ENCODE measurements at regions of chr17 and their contacts with region 1.

Region 1: DNA sequence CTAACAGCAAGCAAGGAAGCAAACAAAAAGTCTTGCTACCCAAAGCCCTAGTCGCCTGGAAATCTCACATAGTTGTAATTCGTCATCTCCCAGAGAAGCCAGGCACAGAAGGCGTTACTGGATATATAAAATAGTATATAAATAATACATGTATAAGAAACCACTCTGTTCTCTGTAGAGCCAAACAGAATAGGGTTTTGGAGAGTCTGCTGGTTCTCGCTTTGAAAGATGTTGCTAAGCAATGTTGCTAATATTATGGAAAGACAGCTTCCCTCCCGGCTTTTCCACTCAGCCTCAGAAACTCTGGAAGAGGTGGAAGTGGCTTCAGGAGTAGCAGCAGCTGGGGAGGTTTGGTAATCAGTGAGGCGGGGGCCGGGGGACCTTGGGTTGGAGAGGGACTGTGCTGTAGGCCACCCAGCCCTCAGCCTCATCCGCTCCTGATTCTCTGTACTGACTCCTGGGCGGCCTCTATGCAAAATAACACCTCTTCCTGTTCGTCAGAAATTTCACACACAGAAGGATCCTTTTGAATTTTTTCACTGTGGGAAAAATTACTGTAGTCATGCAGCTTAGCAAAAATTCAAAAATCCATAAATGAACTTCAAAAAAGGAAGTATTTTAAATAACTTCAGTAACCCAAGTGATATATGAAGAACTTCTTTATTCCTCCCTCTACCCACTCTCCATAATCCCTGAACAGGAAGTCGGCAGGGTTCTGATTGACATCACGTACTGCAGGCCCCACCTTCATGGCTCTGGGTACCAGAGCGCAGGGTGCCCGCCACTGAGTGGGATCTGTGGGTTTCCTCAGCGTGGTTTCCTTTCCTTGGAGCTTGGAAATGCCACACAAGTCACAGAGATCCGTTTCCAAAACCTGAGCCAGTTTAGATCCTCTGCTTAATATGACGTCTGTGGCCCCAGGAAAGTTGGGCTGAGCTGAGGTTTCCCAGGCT is 51.4 kb downstream of the RAP1GAP2 start:
- DNase-seq: no peak
- ATAC-seq: no peak
- H3K4me3 Mint-ChIP-seq: no peak overlapping the region
- H3K27ac Mint-ChIP-seq: no peak overlapping the region
- H3K4me1 Mint-ChIP-seq: peaks cover 10% of the 10 kb centered on the region
- H3K27me3 Mint-ChIP-seq: peaks cover 16% of the 10 kb centered on the region
- CTCF ChIP-seq: no peak

Region 2: DNA sequence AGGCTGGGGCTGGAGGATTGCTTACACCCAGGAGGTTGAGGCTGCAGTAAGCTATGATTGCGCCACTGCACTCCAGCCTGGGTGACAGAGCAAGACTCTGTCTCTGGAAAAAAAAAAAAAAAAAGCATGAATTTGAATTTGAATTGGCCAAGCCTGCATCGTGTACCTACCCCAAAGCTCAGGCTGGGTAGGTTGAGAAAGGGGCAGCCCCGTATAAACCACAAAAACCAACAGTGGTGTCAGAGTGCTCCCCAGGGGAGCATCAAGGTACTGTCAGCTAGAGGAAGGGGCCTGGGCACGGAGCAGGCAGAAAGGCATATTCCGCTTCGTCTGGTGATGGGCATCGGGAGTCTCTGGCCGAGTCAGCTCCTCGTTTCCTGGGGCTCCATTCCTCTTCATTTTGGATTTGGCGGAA is 10.5 kb before region 1 on chr17:
- CTCF ChIA-PET with region 1: interaction called, 52 read pairs
- POLR2A ChIA-PET with region 1: no interaction called
- intact Hi-C with region 1: no loop called
- DNase-seq: peak; percentile 72
- ATAC-seq: peak; percentile 99
- H3K4me3 Mint-ChIP-seq: no peak overlapping the region
- H3K27ac Mint-ChIP-seq: no peak overlapping the region
- H3K4me1 Mint-ChIP-seq: peaks cover 7% of the 10 kb centered on the region
- H3K27me3 Mint-ChIP-seq: peaks cover 2% of the 10 kb centered on the region
- CTCF ChIP-seq: peak; percentile 47

Region 3: GRCh38 chr17:2862197-2862596 is 14.5 kb after region 1 on chr17:
- CTCF ChIA-PET with region 1: interaction called, 18 read pairs
- POLR2A ChIA-PET with region 1: no interaction called
- intact Hi-C with region 1: no loop called
- DNase-seq: no peak
- ATAC-seq: no peak
- H3K4me3 Mint-ChIP-seq: no peak overlapping the region
- H3K27ac Mint-ChIP-seq: no peak overlapping the region
- H3K4me1 Mint-ChIP-seq: no peaks in the 10 kb centered on the region
- H3K27me3 Mint-ChIP-seq: no peaks in the 10 kb centered on the region
- CTCF ChIP-seq: no peak

Region 4: DNA sequence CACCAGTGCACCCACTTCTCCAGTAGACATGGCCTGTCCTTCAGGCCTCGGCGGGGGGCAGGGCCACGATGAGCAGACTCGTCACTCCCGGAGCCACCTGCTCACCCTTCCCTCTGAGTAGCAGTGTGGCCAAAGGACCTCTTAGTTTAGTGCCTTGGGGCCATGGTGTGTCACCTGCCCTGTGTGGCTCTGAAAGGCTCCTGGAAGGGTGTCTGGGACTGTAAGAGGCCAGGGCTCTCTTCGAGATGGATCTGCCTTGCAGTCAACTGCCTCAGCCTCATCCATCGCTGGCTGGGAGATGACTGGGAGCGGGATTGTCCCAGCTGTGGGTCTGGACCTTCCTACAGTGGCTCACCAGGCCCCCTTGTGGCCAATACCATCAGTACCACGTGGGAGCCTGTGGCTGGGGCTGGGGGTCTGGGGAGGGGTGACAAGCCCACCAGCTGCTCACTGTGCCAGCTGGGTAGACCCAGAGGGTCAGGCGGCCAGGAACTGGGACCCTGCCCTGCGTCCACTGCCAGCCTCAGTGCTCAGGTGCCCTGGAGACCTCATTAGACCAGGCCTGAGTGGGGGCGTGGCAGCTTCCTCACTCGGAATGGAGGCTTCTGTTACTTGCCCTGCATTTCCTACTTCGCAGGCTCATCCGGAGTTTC is 82.3 kb after region 1 on chr17:
- CTCF ChIA-PET with region 1: interaction called, 31 read pairs
- POLR2A ChIA-PET with region 1: no interaction called
- intact Hi-C with region 1: no loop called
- DNase-seq: peak; percentile 49
- ATAC-seq: peak; percentile 60
- H3K4me3 Mint-ChIP-seq: no peak overlapping the region
- H3K27ac Mint-ChIP-seq: no peak overlapping the region
- H3K4me1 Mint-ChIP-seq: peaks cover 2% of the 10 kb centered on the region
- H3K27me3 Mint-ChIP-seq: no peaks in the 10 kb centered on the region
- CTCF ChIP-seq: peak; percentile 79

Region 5: GRCh38 chr17:3012926-3013581 is 165.4 kb after region 1 on chr17:
- CTCF ChIA-PET with region 1: interaction called, 96 read pairs
- POLR2A ChIA-PET with region 1: no interaction called
- intact Hi-C with region 1: loop called (anchors 5 kb)
- DNase-seq: peak; percentile 69
- ATAC-seq: peak; percentile 94
- H3K4me3 Mint-ChIP-seq: no peak overlapping the region
- H3K27ac Mint-ChIP-seq: no peak overlapping the region
- H3K4me1 Mint-ChIP-seq: no peaks in the 10 kb centered on the region
- H3K27me3 Mint-ChIP-seq: no peaks in the 10 kb centered on the region
- CTCF ChIP-seq: peak; percentile 68

Measured in activated CD8-positive, alpha-beta T cell treated with anti-CD3 and anti-CD28 coated beads for 36 hours (primary cell).